ENCODE measurements at regions of chr9 and their contacts with region 1.

Region 1: GRCh38 chr9:80664327-80665200 is 1024.8 kb downstream of the TLE1 start:
- DNase-seq: no peak
- ATAC-seq: no peak
- H3K4me3 ChIP-seq: no peak overlapping the region
- H3K27ac ChIP-seq: no peak overlapping the region
- H3K4me1 ChIP-seq: no peaks in the 10 kb centered on the region
- H3K27me3 ChIP-seq: no peaks in the 10 kb centered on the region
- CTCF ChIP-seq: no peak
- POLR2A ChIP-seq: no peak

Region 2: GRCh38 chr9:80175286-80176150 is 489.0 kb before region 1 on chr9:
- intact Hi-C with region 1: no loop called
- DNase-seq: no peak
- ATAC-seq: no peak
- H3K4me3 ChIP-seq: no peak overlapping the region
- H3K27ac ChIP-seq: no peak overlapping the region
- H3K4me1 ChIP-seq: no peaks in the 10 kb centered on the region
- H3K27me3 ChIP-seq: no peaks in the 10 kb centered on the region
- CTCF ChIP-seq: peak; percentile 62 to 84 (median 74)
- POLR2A ChIP-seq: no peak

Region 3: GRCh38 chr9:80951675-80952074 is 287.1 kb after region 1 on chr9:
- intact Hi-C with region 1: loop called in 1 of 10 experiments (anchors 10 kb)
- DNase-seq: no peak
- ATAC-seq: no peak
- H3K4me3 ChIP-seq: no peak overlapping the region
- H3K27ac ChIP-seq: no peak overlapping the region
- H3K4me1 ChIP-seq: peaks cover 0 to 4% (median 0%) of the 10 kb centered on the region in 12 donors
- H3K27me3 ChIP-seq: no peaks in the 10 kb centered on the region
- CTCF ChIP-seq: no peak
- POLR2A ChIP-seq: no peak

Measured in heart left ventricle (tissue), 16 donors.